Left colon (tissue), 2 donors: ENCODE measurements at regions of chr5 and their contacts with region 1.

Region 1: DNA sequence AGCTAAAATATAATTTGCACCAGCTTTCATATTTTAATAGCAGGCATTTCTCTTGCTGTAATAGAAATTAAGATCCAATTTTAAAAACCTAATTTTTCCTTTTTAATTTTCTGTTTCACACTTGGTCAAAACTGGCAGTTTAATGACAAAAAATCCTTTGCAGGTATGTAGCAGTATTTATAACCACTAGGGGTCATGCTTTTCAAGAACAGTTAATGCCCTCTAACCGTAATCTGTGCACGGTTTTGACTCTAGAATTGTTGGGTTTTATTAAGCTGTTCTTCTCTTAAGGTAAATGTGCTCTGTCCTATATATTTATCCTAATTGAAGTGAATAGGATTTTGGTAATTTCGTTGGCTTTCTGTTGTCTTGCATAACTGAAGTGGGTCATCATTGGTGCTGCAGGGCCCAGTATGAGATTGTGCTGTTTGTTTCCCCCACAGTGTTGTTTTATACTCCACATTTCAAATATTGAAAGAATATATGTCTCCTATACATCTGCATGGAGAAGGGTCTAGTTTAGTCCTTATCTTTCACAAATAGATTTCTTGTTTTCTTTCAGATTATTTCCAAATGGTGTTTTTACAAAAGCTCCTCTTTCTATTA is 107.4 kb downstream of the SCAMP1 start:
- DNase-seq: no peak
- ATAC-seq: peak; percentile 79

Region 2: DNA sequence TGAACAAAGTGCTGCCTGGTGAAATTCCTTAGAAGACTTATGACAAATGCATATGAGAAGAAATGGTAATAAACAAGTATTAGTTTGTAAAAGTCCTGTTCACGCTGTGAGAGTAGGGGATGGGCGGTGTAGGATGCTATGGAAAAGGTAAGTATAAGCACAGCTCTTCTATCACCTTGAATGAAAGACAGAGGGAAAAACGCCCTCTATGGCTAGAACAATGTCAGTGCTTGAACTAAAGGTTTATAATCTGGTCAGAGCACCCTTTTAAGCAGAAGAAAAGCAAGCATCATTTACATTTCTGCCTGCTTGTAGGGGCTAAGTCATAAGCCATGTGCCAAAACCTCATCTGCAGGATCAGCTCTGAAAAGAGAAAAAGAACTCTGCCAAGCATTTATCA is 65.5 kb after region 1 on chr5:
- intact Hi-C with region 1: loop called in 1 of 2 experiments (anchors 5 kb)
- DNase-seq: no peak
- ATAC-seq: no peak

Region 3: DNA sequence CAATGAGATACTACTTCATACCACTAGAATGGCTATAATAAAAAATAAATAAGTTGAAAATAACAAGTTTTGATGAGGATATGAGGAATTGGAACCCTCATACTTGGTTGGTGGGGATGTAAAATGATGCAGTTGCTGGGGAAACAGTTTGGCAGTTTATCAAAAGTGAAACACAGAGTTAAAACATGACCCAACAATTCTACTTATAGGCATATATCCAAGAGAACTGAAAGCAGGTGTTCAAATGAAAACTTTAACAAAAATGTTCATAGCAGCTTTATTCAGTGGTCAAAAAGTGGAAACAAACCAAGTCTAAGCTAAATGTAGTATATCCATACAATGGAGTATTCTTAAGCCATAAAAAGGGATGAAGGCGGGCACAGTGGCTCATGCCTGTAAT is 193.8 kb after region 1 on chr5:
- intact Hi-C with region 1: no loop called
- DNase-seq: no peak
- ATAC-seq: no peak

Region 4: DNA sequence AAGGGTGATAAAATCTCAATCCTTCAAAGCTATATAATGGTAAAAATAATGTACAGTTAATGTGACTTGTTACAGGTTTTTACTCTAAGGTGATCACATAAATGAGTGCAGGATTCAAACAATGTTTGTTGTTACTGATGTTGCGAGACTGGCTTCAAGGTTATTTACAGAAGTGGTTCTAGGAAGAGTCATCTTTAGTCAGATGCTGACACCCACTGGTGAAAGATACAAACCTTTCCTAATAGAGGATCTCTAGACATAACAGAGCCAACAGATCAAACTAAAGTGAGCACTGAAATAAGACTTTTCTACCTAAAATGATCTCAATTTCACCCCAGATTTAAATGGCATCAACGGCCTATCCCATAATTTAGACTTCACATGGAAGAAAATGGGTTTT is 497.0 kb after region 1 on chr5:
- intact Hi-C with region 1: loop called in 1 of 2 experiments (anchors 5 kb)
- DNase-seq: no peak
- ATAC-seq: peak; percentile 54

Region 5: DNA sequence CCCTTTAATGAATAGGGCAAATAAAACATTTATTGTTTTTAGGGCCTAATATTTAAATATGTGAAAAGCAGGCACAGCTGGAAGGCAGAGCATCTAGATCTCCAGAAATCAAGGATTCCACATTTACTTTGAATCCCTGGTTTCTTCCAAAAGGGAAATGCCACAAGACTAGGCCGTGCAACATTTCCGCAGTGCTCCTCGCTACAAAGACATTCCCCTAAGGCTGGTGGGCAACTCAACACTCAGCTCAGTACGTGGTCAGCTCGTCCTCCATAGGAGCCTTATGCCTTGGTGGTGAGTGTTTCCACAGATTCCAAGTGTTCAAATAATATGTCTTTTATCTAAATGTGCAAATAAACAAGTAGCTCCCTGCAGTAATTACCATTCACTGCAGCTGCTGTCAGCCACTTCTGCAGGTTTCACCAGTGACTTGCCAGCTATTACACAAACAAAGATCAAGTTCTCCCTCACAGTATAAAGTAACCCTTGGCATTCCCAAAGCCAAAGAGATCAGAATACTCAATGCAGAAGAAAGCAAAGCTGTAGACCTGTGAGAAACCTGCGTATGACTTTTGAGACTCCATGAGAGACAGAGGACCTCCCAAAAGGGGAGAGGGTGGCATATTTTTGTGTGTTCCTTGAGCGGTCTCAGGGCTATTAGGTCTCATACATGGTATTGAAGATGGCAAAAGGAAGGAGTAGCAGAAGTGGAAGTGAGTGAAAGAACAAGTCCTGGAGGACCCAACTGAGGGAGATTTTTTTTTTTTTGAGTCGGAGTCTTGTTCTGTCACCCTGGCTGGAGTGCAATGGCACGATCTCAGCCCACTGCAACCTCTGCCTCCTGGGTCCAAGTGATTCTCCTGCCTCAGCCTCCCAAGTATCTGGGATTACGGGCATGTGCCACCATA is 1106.4 kb after region 1 on chr5:
- intact Hi-C with region 1: no loop called
- DNase-seq: no peak
- ATAC-seq: no peak